ENCODE measurements at regions of chr15 and their contacts with region 1.

Region 1: DNA sequence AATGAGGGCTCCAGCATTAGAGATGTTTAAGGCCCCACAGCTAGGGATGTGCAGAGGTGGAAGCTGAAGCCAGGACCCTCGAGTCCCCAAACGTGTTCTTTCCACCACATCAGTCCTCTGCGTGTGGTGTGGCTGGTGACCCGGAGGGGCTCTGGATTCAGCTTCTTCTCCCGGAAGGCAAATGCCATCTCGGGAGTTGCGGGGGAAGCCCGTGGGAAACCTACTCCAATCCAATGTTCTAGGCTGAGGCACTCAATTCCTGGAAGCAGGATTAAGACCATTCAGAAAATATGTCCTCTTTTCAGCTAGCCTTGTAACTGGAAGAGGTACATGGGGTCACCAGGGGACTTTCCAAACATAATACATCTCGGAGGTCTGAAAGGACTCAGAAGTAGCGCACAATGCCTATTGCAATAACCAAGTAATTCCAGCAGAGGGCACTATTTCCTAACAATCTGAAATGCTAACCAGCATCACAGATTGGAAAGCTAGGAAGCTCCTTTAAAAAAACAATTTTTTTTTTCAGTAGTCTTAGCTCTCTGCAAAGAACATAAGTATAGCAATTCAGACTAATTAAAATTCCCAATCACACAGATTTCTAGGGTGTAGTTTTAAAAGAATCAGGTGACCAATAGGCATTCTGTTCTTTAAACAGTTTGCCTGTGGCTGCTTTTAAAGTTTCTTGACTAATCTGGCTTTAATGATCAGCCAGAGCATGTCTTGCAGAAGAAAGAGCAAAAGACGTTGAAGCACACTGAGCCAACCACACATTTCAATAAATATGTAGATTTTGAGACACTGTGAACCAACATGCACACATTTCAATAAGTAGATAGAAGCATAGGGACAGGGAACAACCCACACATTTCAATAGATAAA is 36.1 kb downstream of the BNC1 start:
- DNase-seq: no peak
- ATAC-seq: no peak

Region 2: GRCh38 chr15:82613747-82614146 is 634.6 kb before region 1 on chr15:
- intact Hi-C with region 1: no loop called
- DNase-seq: no peak
- ATAC-seq: no peak

Region 3: DNA sequence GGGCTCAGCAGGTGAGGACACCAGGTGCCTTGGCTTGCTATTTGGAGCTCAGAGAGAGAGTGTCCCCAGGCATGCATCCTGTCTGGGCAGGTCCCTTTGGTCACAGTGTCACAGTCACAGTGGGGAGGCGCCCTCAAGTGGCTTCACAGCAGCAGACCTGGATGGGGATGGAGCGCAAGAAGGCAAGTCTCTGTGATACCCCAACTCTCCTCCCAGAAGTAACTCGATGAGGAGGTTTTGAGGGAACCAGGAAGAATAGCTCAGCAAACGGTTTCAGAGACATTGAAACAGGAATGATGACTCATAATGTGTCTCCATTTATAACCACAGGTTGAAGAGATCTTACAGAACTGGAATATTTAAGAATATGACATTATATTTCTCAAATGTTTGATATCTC is 132.3 kb after region 1 on chr15:
- intact Hi-C with region 1: loop called (anchors 2 kb)
- DNase-seq: no peak
- ATAC-seq: peak; percentile 67

Region 4: GRCh38 chr15:83436458-83437158 is 188.2 kb after region 1 on chr15:
- intact Hi-C with region 1: loop called (anchors 2 kb)
- DNase-seq: no peak
- ATAC-seq: peak; percentile 57

Region 5: DNA sequence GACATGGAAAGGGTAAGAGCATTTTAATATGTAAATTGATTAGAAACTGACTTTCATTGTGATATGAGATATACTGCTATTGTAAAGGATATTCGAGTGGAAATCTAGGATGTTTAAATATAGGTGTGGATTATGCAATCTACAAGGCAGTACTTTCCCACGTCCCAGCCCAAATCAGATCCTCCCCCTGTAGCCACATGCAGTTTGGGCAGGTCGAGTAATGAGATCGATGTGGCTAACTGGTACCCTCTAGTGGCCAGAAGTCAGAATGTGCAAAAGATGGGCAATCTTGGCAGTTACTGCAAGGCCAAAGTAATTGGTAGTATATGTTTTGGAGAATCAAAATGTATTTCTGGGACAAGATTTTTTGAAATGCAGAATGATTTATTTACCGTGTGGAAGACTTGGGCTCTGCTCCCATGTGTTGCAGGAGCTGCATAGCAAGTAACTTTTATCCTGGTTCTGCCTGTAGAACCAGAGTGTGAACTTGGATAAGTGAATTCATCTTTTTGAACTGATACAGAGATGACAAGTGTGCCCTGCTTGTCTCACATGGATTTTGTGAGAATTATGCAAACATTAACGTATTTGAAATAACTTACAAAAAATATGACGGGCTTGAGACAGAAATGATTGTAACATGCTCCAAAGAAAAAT is 311.0 kb after region 1 on chr15:
- intact Hi-C with region 1: loop called (anchors 1 kb)
- DNase-seq: no peak
- ATAC-seq: peak; percentile 76